HAP-1 (cell line): ENCODE measurements at regions of chr3 and their contacts with region 1.

Region 1: GRCh38 chr3:111539351-111540331 is 2.4 kb upstream of the CD96 start:
- DNase-seq: peak; percentile 51 to 83
- H3K4me3 ChIP-seq: no peak overlapping the region
- H3K4me1 ChIP-seq: peaks cover 8% of the 10 kb centered on the region
- H3K27me3 ChIP-seq: no peaks in the 10 kb centered on the region

Region 2: GRCh38 chr3:109532257-109533216 is 2007.1 kb before region 1 on chr3:
- in situ Hi-C with region 1: loop called (anchors 25 kb)
- DNase-seq: peak; percentile 71 to 81
- H3K4me3 ChIP-seq: no peak overlapping the region
- H3K4me1 ChIP-seq: peaks cover 6% of the 10 kb centered on the region; the same call in 1 of the 2 replicates
- H3K27me3 ChIP-seq: no peaks in the 10 kb centered on the region